CD4-positive, alpha-beta memory T cell (primary cell): ENCODE measurements at regions of chr7 and their contacts with region 1.

Region 1: GRCh38 chr7:134432296-134433152 is 26.4 kb downstream of the AKR1B1 start:
- DNase-seq: peak; percentile 68 to 72 (median 69)
- H3K4me3 ChIP-seq: peak overlapping the region in 1 of 2 donors; percentile 30
- H3K4me3 Mint-ChIP-seq: peak overlapping the region; percentile 79 to 93 (median 85)
- H3K27ac ChIP-seq: peak overlapping the region; percentile 21
- H3K27ac Mint-ChIP-seq: peak overlapping the region; percentile 85 to 94 (median 92)
- H3K4me1 ChIP-seq: peaks cover 13% of the 10 kb centered on the region
- H3K4me1 Mint-ChIP-seq: peaks cover 8 to 14% (median 10%) of the 10 kb centered on the region in 4 donors
- H3K27me3 ChIP-seq: no peaks in the 10 kb centered on the region
- H3K27me3 Mint-ChIP-seq: peaks cover 2 to 3% of the 10 kb centered on the region in 2 donors

Region 2: DNA sequence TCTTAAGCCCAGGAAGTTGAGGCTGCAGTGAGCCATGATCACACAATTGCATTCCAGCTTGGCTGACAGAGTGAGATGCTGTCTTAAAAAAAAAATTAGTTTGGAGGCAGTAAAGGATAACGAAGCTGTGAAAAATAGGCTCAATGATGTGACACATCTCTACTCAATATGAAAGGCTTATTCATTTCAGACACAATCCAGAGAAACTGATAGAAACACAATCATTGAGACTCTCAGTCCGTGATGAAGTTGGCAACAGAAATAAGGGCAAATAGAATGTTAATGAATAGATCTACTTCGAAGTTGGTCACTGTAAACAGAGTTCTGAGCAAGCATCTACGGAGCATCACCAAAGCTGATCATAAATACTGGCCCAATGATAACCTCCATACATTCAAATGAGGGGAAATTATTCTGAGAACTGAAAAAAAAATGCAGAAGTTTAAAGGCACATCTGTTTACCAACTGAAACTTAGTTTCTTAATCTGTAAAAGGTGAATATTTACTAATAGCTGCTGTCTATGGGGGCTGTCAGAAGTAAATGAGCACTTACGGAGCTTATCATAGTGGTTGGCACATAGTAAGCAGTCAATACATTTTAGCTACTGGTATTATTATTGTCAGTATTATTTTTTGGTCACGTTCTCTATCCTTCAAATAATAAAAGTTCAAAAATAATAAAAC is 44.0 kb before region 1 on chr7:
- CTCF ChIA-PET with region 1: no interaction called
- POLR2A ChIA-PET with region 1: no interaction called
- intact Hi-C with region 1: no loop called
- DNase-seq: no peak
- H3K4me3 ChIP-seq: no peak overlapping the region
- H3K4me3 Mint-ChIP-seq: no peak overlapping the region
- H3K27ac ChIP-seq: no peak overlapping the region
- H3K27ac Mint-ChIP-seq: no peak overlapping the region
- H3K4me1 ChIP-seq: no peaks in the 10 kb centered on the region
- H3K4me1 Mint-ChIP-seq: no peaks in the 10 kb centered on the region
- H3K27me3 ChIP-seq: no peaks in the 10 kb centered on the region
- H3K27me3 Mint-ChIP-seq: peaks cover 0 to 3% of the 10 kb centered on the region in 2 donors

Region 3: DNA sequence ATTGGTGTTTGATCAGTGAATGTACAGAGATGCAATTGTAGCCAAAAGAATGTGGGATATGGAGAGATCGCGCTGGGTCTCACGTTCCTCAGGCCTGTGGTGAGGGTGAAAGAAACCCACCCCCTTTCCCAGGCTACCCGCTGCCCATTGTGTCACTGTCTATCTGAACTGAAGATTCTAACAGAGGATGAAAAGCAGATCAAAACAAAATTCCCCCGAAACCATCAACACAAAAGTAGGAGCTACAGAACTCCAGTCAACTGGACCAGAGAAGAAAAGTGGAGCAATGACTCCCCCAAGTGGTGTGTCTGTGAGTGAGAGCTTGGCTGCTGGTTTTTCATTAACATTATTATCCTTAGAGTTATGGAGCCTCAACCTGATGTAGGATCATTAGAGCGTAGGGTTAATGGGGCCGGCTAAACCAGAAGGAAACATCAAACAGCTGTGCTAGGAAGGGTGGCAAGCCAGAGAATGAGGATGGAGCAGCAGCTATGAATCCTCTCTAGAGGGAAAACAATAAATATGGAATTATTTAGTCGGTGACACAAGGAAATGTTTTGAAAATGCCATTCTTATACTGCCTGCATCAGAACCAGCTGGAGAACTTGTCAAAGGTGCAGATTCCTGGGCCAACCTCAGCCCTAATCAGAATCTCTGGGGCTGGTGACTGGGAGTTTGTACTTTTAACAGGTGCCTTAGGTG is 11.9 kb before region 1 on chr7:
- CTCF ChIA-PET with region 1: interaction called, 15 read pairs
- POLR2A ChIA-PET with region 1: no interaction called
- intact Hi-C with region 1: no loop called
- DNase-seq: no peak
- H3K4me3 ChIP-seq: no peak overlapping the region
- H3K4me3 Mint-ChIP-seq: no peak overlapping the region
- H3K27ac ChIP-seq: no peak overlapping the region
- H3K27ac Mint-ChIP-seq: no peak overlapping the region
- H3K4me1 ChIP-seq: no peaks in the 10 kb centered on the region
- H3K4me1 Mint-ChIP-seq: no peaks in the 10 kb centered on the region
- H3K27me3 ChIP-seq: no peaks in the 10 kb centered on the region
- H3K27me3 Mint-ChIP-seq: peaks cover 3 to 8% of the 10 kb centered on the region in 2 donors

Region 4: DNA sequence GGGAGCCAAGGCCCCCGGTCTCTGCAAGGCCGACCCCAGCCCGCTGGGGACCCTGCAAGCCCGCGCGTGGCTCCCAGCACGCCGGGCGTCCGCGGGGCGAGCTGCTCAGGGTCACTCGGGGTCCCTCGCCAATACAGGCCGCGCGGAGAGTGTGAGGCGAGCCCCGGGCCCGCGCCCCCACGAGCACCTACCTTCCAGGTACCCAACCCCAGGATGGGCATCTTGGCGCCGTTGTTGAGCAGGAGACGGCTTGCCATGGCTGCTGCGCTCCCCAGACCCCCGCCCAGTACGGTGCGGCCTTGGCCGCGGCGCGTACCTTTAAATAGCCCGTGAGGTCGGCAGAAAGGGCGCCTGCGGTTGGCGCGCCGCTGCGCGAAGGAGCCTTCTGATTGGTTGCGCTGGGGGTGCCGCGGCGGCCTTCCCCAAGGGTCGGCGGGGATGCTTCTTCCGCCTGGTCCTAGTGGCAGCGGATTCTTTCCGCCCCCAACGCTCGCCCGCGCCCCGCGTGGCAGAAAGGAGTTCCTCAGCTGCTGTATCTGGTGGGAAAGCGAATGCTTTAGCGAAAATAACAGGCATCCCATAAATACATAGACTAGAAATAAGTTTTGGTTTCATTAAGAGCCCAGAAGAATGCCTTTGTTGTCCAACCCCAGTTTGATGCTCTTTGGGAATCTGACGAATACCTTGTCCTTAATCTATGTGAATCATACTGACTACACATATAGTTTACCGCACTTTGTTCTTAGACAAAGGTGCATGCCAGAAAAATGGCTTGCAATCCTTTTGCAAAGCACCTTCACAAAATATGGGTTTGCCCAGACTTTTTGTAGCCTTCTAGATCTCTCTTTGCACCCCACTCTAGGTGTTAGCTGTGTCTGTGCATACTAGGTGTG is 26.5 kb after region 1 on chr7 and contains the start of gene AKR1B1:
- CTCF ChIA-PET with region 1: interaction called, 50 read pairs
- POLR2A ChIA-PET with region 1: interaction called, 15 read pairs
- intact Hi-C with region 1: loop called (anchors 1 kb)
- DNase-seq: peak; percentile 84 to 89 (median 86)
- H3K4me3 ChIP-seq: peak within 1 kb of the TSS; percentile 25 to 62
- H3K4me3 Mint-ChIP-seq: peak within 1 kb of the TSS; percentile 91 to 94 (median 92)
- H3K27ac ChIP-seq: peak within 1 kb of the TSS; percentile 55
- H3K27ac Mint-ChIP-seq: peak within 1 kb of the TSS; percentile 71 to 95 (median 88)
- H3K4me1 ChIP-seq: peaks cover 36% of the 10 kb centered on the region
- H3K4me1 Mint-ChIP-seq: peaks cover 38 to 57% (median 43%) of the 10 kb centered on the region in 4 donors
- H3K27me3 ChIP-seq: no peaks in the 10 kb centered on the region
- H3K27me3 Mint-ChIP-seq: no peaks in the 10 kb centered on the region
- total RNA-seq, gene AKR1B1: 81.2 to 91.1 TPM

Region 5: GRCh38 chr7:134514663-134515062 is 82.1 kb after region 1 on chr7:
- CTCF ChIA-PET with region 1: interaction called, 56 read pairs
- POLR2A ChIA-PET with region 1: interaction called, 7 read pairs
- intact Hi-C with region 1: loop called (anchors 1 kb)
- DNase-seq: peak in 4 of 5 donors; percentile 45 to 60 (median 55)
- H3K4me3 ChIP-seq: no peak overlapping the region
- H3K4me3 Mint-ChIP-seq: peak overlapping the region in 1 of 8 donors; percentile 63
- H3K27ac ChIP-seq: no peak overlapping the region
- H3K27ac Mint-ChIP-seq: no peak overlapping the region
- H3K4me1 ChIP-seq: no peaks in the 10 kb centered on the region
- H3K4me1 Mint-ChIP-seq: peaks cover 0 to 5% (median 3%) of the 10 kb centered on the region in 4 donors
- H3K27me3 ChIP-seq: no peaks in the 10 kb centered on the region
- H3K27me3 Mint-ChIP-seq: peaks cover 4 to 21% of the 10 kb centered on the region in 2 donors

Region 6: GRCh38 chr7:134574322-134574721 is 141.8 kb after region 1 on chr7:
- CTCF ChIA-PET with region 1: no interaction called
- POLR2A ChIA-PET with region 1: no interaction called
- intact Hi-C with region 1: no loop called
- DNase-seq: no peak
- H3K4me3 ChIP-seq: no peak overlapping the region
- H3K4me3 Mint-ChIP-seq: no peak overlapping the region
- H3K27ac ChIP-seq: no peak overlapping the region
- H3K27ac Mint-ChIP-seq: no peak overlapping the region
- H3K4me1 ChIP-seq: no peaks in the 10 kb centered on the region
- H3K4me1 Mint-ChIP-seq: no peaks in the 10 kb centered on the region
- H3K27me3 ChIP-seq: no peaks in the 10 kb centered on the region
- H3K27me3 Mint-ChIP-seq: peaks cover 0 to 13% of the 10 kb centered on the region in 2 donors

Region 7: DNA sequence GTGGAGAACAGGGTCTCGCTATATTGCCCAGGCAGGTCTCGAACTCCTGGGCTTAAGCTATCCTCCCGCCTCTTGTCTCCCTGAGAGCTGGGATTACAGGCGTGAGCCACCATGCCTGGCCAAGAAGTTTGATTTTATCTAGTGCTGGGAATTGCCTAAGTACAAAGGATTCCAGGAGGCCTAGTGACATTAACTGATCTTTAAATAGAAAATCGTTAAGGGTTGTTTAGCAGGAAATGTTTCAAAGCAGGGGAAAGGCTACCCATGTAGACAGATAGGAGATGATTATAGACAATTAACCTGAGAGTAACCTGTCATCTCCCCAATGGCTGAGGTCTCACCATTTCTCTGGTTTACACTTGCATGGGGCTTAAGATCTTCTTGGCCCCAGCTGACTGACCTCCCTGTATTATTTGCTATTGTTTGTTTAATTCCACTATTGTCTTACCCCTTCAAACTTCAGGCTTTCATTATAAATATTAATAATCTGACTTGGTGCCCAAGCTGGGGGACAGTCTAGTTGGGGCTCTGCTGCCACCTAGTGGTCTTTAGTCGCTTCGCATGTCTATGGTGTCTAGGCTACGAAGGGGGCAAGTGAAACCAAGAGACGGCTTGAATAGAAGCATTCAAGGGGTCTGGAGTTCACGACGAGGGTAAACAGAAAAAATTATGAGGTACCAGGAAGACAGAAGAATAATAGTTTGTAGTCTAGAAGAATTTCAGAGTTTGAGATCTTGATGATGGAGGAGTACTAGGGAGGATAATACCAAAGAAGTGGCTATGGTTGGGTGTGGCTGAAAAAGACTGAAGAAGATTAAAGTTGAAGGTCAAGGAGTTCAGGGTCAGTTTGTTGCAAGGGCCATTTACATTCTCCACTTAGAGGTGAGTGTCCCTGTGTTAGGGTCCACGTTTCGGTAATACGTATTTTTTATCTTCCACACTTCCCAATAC is 173.7 kb after region 1 on chr7:
- CTCF ChIA-PET with region 1: interaction called, 75 read pairs
- POLR2A ChIA-PET with region 1: interaction called, 3 read pairs
- intact Hi-C with region 1: loop called (anchors 1 kb)
- DNase-seq: peak; percentile 45 to 65 (median 48)
- H3K4me3 ChIP-seq: no peak overlapping the region
- H3K4me3 Mint-ChIP-seq: peak overlapping the region; percentile 26 to 80 (median 63)
- H3K27ac ChIP-seq: no peak overlapping the region
- H3K27ac Mint-ChIP-seq: peak overlapping the region in 1 of 7 donors; percentile 15
- H3K4me1 ChIP-seq: no peaks in the 10 kb centered on the region
- H3K4me1 Mint-ChIP-seq: peaks cover 0 to 4% (median 3%) of the 10 kb centered on the region in 4 donors
- H3K27me3 ChIP-seq: no peaks in the 10 kb centered on the region
- H3K27me3 Mint-ChIP-seq: peaks cover 18 to 30% of the 10 kb centered on the region in 2 donors

Region 8: GRCh38 chr7:134750083-134751062 is 317.8 kb after region 1 on chr7:
- CTCF ChIA-PET with region 1: interaction called, 7 read pairs
- POLR2A ChIA-PET with region 1: no interaction called
- intact Hi-C with region 1: loop called (anchors 1 kb)
- DNase-seq: peak; percentile 40 to 64 (median 52)
- H3K4me3 ChIP-seq: no peak overlapping the region
- H3K4me3 Mint-ChIP-seq: no peak overlapping the region
- H3K27ac ChIP-seq: no peak overlapping the region
- H3K27ac Mint-ChIP-seq: no peak overlapping the region
- H3K4me1 ChIP-seq: no peaks in the 10 kb centered on the region
- H3K4me1 Mint-ChIP-seq: no peaks in the 10 kb centered on the region
- H3K27me3 ChIP-seq: no peaks in the 10 kb centered on the region
- H3K27me3 Mint-ChIP-seq: peaks cover 0 to 2% of the 10 kb centered on the region in 2 donors